Common myeloid progenitor, CD34-positive (primary cell): ENCODE measurements at regions of chr12 and their contacts with region 1.

Region 1: GRCh38 chr12:110037315-110037714 is 11.0 kb downstream of the C12orf76 start:
- DNase-seq: no peak
- H3K4me3 ChIP-seq: no peak overlapping the region
- H3K27ac ChIP-seq: peak overlapping the region in 1 of 2 experiments; percentile 30
- H3K4me1 ChIP-seq: peaks cover 12 to 25% (median 21%) of the 10 kb centered on the region in 4 experiments
- H3K27me3 ChIP-seq: no peaks in the 10 kb centered on the region

Region 2: DNA sequence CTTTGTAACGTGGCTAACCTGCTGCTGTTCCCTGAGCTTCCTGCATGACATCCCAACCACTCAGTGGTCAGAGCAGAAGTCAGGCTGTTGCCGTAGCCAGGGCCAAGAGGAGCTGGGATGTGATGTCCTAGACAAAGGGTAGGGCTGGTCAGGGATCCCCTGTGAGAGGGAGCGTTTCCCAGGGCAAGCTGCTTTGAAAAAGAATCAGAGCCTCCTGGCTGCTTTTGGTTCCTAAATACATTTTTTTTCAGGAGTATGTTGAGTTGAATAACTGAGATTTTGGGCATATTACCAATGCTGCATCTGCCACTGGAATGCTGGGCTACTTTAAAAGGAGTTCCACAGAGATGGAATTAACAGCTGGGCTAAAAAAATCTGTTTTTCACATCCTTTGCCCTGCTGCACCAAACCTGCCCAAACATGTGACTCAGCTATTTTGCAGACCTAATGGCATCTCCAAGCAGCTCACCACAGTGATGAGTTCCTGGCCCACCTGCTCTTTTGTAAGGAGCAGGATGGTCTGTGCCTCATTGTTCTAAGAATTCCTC is 14.2 kb before region 1 on chr12:
- CTCF ChIA-PET with region 1: interaction called, 13 read pairs
- POLR2A ChIA-PET with region 1: no interaction called
- DNase-seq: peak in 1 of 3 donors; percentile 32
- H3K4me3 ChIP-seq: no peak overlapping the region
- H3K27ac ChIP-seq: no peak overlapping the region
- H3K4me1 ChIP-seq: peaks cover 0 to 10% (median 5%) of the 10 kb centered on the region in 4 experiments
- H3K27me3 ChIP-seq: no peaks in the 10 kb centered on the region